ENCODE measurements at regions of chr1 and their contacts with region 1.

Region 1: GRCh38 chr1:64686828-64687724 is 57.8 kb upstream of the RAVER2 start:
- DNase-seq: peak; percentile 54
- H3K4me3 Mint-ChIP-seq: peak overlapping the region; percentile 44
- H3K27ac Mint-ChIP-seq: peak overlapping the region; percentile 88
- H3K4me1 Mint-ChIP-seq: peaks cover 40% of the 10 kb centered on the region
- H3K27me3 Mint-ChIP-seq: no peaks in the 10 kb centered on the region
- CTCF ChIP-seq: peak; percentile 76

Region 2: DNA sequence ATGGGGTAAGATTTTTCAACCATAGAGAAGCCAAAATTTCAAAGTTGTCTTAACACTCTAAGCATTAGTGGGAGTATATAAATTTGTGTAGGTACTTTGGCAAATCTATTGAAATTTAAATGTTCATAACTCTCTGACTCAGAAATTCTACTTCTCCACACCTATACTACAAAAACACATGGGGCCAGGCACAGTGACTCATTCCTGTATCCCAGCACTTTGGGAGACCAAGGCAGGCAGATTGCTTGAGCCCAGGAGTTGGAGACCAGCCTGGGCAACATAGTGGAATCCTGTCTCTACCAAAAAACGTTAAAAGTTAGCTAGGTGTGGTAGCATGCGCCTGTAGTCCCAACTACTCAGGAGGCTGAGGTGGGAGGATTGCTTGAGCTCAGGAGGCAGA is 16.5 kb after region 1 on chr1:
- CTCF ChIA-PET with region 1: no interaction called
- intact Hi-C with region 1: no loop called
- DNase-seq: no peak
- H3K4me3 Mint-ChIP-seq: no peak overlapping the region
- H3K27ac Mint-ChIP-seq: no peak overlapping the region
- H3K4me1 Mint-ChIP-seq: no peaks in the 10 kb centered on the region
- H3K27me3 Mint-ChIP-seq: no peaks in the 10 kb centered on the region
- CTCF ChIP-seq: no peak

Region 3: DNA sequence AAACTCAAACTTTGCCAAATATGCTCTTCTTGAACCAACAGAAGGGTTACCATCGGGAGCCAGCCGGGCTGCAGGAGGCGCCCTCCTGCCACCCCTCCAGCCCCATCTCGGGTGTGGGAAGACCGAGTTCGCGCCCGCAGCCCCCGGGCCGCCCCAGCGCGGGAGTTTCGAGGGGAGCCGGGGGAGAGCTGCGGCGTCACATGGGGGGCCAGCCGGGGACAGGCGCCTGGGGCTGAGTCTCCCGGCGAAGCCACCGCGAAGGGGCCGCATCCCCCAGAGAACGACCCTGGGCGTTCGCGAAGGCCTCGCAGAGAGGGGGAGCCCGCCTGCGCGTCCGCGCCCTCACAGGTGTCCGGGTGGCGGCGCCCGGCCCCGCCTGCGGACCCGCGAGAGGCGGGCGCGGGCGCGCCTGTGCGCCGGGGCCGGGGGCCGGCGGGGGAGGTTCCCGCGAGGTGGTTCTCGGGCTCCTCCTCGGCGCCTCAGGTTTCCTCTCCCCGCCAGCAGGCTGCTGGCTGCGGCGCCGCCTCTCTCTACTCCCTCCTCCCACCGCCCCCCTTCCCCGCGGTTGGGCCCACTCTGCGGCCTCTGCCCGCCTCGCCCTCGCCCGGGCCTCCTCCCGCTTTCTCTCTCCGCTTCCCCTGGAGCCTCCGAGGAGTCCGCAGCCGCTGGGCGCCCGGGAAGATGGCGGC is 57.6 kb after region 1 on chr1 and contains the start of gene RAVER2:
- CTCF ChIA-PET with region 1: no interaction called
- intact Hi-C with region 1: loop called (anchors 2 kb)
- DNase-seq: peak; percentile 80
- H3K4me3 Mint-ChIP-seq: peak within 1 kb of the TSS; percentile 94
- H3K27ac Mint-ChIP-seq: peak within 1 kb of the TSS; percentile 49
- H3K4me1 Mint-ChIP-seq: peaks cover 23% of the 10 kb centered on the region
- H3K27me3 Mint-ChIP-seq: no peaks in the 10 kb centered on the region
- CTCF ChIP-seq: peak; percentile 56
- total RNA-seq, gene RAVER2: 10.3 and 12.8 TPM in 2 replicates

Region 4: GRCh38 chr1:64755361-64755760 is 68.3 kb after region 1 on chr1:
- CTCF ChIA-PET with region 1: no interaction called
- intact Hi-C with region 1: loop called (anchors 1 kb)
- DNase-seq: peak; percentile 33
- H3K4me3 Mint-ChIP-seq: peak overlapping the region; percentile 4
- H3K27ac Mint-ChIP-seq: peak overlapping the region; percentile 25
- H3K4me1 Mint-ChIP-seq: peaks cover 34% of the 10 kb centered on the region
- H3K27me3 Mint-ChIP-seq: no peaks in the 10 kb centered on the region
- CTCF ChIP-seq: no peak